ENCODE measurements at regions of chr12 and their contacts with region 1.

Region 1: GRCh38 chr12:63814146-63814772 is 30.2 kb upstream of the SRGAP1 start:
- DNase-seq: no peak
- CTCF ChIP-seq: no peak

Region 2: DNA sequence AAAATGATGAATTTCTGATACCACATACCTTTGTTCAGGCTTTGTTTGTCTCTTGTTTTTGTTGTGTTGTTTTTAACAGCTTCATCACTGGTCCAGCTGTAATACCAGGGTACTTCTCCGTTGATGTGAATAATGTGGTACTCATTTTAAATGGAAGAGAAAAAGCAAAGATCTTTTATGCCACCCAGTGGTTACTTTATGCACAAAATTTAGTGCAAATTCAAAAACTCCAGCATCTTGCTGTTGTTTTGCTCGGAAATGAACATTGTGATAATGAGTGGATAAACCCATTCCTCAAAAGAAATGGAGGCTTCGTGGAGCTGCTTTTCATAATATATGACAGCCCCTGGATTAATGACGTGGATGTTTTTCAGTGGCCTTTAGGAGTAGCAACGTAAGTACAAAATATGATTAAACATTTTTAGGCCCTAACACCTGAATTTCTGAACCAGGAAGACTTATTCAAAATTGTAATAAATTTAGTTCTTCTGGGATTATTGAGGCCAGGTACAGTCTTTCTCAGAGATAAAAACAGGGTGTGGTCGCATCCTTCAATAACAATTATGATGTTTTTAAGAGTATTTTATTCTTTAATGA is 12.1 kb before region 1 on chr12:
- CTCF ChIA-PET with region 1: interaction called, 13 read pairs
- POLR2A ChIA-PET with region 1: no interaction called
- DNase-seq: peak; percentile 18
- CTCF ChIP-seq: peak; percentile 33

Region 3: DNA sequence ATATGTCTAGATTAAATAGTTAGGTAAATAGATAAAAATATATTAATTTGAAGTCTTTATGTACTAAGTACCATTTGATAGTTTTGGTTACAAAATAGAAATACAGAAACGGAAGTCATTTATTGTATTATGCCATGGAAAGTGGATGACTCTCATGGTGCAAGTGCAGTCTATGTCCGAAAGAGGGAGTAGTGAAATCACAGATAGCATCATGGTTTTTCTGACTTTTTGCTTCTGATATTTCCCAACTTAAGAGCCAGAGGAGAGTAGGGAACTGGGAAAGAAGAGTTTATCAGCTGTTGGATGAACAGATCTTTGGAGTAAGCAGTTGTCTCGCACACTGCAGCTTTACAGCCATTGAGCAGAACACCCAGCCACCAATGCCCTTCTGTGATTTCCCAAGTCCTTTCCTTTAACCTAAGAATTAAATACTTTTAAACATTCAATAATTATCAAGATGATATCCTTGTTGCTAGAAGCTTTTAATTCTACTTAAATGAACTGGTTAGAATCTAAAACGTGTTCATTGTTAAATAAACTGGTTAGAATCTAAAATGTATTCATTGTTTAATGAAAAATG is 11.8 kb after region 1 on chr12:
- CTCF ChIA-PET with region 1: interaction called, 12 read pairs
- POLR2A ChIA-PET with region 1: no interaction called
- DNase-seq: peak; percentile 48
- CTCF ChIP-seq: peak; percentile 76

Measured in GM10248 (cell line).